Dendritic cell treated with granulocyte-macrophage colony-stimulating factor and Interleukin-4, amounts not matched to agents 40 ng/mL and 50 ng/mL, for 4 days (primary cell): ENCODE measurements at regions of chr14 and their contacts with region 1.

Region 1: DNA sequence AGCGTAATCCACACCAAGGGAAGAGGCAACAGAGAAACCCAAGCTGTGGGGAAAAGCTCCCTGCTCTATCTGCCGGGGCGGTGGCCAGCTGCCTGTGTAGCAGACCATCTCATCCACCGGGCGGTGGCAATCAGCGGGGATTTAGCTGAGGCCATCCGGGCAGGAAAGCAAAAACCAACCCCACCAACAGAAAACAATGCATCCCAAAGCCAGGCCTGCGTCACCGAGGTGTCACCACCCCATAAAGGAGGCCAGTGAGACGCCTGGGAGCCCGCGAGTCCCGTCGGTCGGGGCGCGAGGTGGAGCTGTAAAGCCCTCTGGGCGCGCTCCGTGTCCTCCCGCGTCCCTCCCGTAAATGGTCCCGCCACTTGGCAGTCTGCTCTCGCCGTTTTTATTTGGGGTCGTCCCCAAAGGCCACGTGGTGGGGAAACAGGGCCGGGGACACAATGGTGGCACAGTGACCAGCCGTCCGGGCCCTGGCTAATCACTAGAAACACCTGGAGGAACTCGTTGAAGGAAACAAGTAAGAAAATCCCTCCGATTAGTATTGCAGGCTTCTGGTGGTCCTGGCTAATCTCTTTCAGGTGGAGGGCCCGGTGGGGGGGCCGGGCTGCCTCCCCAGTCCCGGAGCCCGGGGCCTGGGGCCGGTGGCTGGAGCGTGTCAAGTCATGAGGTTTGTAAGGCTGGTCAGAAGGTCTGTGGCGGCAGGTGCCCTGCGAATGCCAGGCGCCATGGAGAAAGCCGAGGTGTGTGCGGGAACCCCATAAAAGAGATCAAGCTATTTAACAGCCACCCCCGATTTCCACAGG is 94.7 kb upstream of the GSC start:
- H3K4me3 Mint-ChIP-seq: no peak overlapping the region
- H3K27ac Mint-ChIP-seq: no peak overlapping the region
- H3K4me1 Mint-ChIP-seq: no peaks in the 10 kb centered on the region
- H3K27me3 Mint-ChIP-seq: peaks cover 27% of the 10 kb centered on the region

Region 2: DNA sequence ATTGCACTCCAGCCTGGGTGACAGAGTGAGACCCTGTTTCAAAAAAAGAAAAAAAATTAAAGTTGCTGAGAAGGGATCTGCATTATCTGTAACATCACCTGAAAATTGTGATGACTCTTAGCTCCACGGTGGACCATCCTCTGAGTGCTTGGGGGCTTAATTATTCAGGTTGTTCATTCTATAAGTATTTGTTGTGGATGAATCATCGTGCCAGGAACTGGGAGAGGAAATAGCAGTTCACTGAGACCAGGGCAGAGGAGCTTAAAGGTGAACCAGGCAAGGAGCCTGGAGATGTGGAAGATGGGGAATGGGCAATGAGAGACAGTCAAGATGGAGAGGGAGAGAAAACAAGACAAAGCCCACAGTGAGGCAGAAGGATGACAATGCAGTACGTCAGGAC is 69.2 kb before region 1 on chr14:
- intact Hi-C with region 1: no loop called
- H3K4me3 Mint-ChIP-seq: no peak overlapping the region
- H3K27ac Mint-ChIP-seq: no peak overlapping the region
- H3K4me1 Mint-ChIP-seq: no peaks in the 10 kb centered on the region
- H3K27me3 Mint-ChIP-seq: peaks cover 8% of the 10 kb centered on the region

Region 3: GRCh38 chr14:94816113-94816512 is 48.5 kb before region 1 on chr14:
- intact Hi-C with region 1: loop called (anchors 2 kb)
- H3K4me3 Mint-ChIP-seq: no peak overlapping the region
- H3K27ac Mint-ChIP-seq: no peak overlapping the region
- H3K4me1 Mint-ChIP-seq: no peaks in the 10 kb centered on the region
- H3K27me3 Mint-ChIP-seq: peaks cover 3% of the 10 kb centered on the region